Panc1 (cell line): ENCODE measurements at regions of chr6 and their contacts with region 1.

Region 1: DNA sequence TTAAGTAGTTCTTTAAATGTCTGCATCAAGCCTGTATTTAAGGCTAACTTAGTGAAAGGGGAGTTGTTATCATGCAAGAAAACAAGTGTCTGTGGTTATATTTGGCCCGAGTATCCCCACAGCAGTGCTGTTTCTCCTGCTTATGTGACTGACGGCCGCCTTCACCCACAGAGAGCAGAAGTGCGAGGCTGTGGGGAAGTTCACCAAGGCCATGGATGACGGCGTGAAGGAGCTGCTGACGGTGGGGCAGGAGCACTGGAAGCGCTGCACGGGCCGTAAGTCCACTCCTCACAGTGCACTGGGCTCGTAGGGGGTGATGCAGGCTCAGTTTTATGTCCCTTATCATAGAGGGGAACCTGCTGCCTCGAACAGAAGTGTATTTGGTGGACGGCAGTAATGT is 53.2 kb upstream of the SYNJ2 start:
- DNase-seq: no peak
- ATAC-seq: no peak
- H3K4me3 ChIP-seq: no peak overlapping the region
- H3K27ac ChIP-seq: no peak overlapping the region
- H3K4me1 ChIP-seq: no peaks in the 10 kb centered on the region
- H3K27me3 ChIP-seq: no peaks in the 10 kb centered on the region
- CTCF ChIP-seq: no peak

Region 2: DNA sequence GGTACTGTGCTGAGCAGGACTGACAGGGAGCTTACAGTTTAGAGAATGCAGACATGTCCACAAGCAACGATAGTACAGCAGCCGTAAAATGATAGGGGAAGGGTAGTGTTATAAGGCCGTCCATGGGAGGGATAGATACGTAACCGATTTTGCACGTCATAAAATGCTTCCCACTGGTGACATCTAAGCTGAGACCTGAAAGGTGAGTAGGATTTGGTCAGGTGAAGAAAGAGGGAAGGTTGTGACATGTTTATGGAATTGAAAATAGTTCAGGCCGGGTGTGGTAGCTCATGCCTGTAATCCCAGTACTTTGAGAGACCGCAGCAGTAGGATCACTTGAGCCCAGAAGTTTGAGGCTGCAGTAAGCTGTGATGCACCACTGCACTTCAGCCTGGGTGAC is 79.7 kb before region 1 on chr6:
- CTCF ChIA-PET with region 1: no interaction called
- POLR2A ChIA-PET with region 1: interaction called, 11 read pairs
- in situ Hi-C with region 1: no loop called
- intact Hi-C with region 1: no loop called
- DNase-seq: no peak
- ATAC-seq: no peak
- H3K4me3 ChIP-seq: no peak overlapping the region
- H3K27ac ChIP-seq: no peak overlapping the region
- H3K4me1 ChIP-seq: peaks cover 48% of the 10 kb centered on the region
- H3K27me3 ChIP-seq: no peaks in the 10 kb centered on the region
- CTCF ChIP-seq: no peak